ENCODE measurements at regions of chr6 and their contacts with region 1.

Region 1: DNA sequence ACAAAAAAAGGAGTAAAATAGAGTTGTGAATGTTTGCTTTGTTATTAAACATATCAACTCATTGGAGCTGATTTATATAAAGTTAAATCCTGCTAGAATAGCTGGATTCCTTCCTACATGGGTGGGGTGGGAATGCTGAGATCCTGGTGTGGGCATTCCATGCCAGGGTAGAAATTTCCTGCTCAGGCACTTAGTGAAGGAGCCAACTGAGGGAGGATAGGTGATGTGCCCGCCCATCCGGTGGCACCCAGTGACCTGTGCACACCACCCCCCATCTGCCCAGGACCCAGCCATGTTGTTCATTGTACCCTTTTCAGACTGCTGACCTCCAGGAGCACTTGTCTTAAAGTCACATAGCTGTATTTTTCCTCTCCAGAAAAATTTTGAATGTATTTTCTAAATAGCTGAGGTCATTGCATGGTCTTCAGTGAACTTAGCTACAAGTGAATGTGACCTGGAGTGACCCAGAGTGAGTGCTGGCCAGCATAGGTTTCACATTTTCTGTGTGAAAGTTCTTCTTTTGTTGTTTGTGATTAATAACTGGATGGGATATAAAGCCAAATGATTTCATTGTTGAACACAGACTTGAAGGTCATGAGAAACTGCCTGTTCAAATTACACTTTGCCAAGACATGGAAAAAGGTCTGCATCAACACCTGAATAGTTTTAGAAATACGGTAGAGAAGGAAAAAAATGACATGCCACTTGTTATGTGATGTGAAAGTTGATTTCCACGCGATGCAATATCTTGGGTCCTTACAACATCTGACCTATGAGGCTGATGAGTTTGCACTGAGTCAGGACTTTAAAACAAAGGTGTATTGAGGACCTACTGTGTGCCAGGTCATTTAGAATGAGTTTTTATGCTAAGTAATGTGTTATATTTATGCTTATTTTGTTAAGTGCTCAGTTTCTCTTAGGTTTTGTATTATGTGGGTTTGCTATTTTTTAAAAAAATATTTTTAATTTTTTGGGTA is 77.2 kb downstream of the UTRN start:
- DNase-seq: peak in 1 of 2 donors; percentile 40
- ATAC-seq: peak; percentile 65 to 86 (median 81)
- H3K4me3 ChIP-seq: no peak overlapping the region
- H3K27ac ChIP-seq: peak overlapping the region in 9 of 10 donors; percentile 15 to 76 (median 47)
- H3K4me1 ChIP-seq: peaks cover 0 to 80% (median 66%) of the 10 kb centered on the region in 9 donors
- H3K27me3 ChIP-seq: no peaks in the 10 kb centered on the region
- CTCF ChIP-seq: no peak

Region 2: GRCh38 chr6:144343701-144344428 is 18.5 kb before region 1 on chr6:
- intact Hi-C with region 1: loop called in 1 of 10 experiments (anchors 1 kb)
- DNase-seq: peak in 1 of 2 donors; percentile 31
- ATAC-seq: peak; percentile 72 to 93 (median 82)
- H3K4me3 ChIP-seq: peak overlapping the region in 9 of 10 donors; percentile 15 to 51 (median 39)
- H3K27ac ChIP-seq: peak overlapping the region; percentile 22 to 85 (median 72)
- H3K4me1 ChIP-seq: peaks cover 0 to 100% (median 91%) of the 10 kb centered on the region in 9 donors
- H3K27me3 ChIP-seq: no peaks in the 10 kb centered on the region
- CTCF ChIP-seq: no peak

Measured in heart right ventricle (tissue), 16 donors.